ENCODE measurements at regions of chr1 and their contacts with region 1.

Region 1: DNA sequence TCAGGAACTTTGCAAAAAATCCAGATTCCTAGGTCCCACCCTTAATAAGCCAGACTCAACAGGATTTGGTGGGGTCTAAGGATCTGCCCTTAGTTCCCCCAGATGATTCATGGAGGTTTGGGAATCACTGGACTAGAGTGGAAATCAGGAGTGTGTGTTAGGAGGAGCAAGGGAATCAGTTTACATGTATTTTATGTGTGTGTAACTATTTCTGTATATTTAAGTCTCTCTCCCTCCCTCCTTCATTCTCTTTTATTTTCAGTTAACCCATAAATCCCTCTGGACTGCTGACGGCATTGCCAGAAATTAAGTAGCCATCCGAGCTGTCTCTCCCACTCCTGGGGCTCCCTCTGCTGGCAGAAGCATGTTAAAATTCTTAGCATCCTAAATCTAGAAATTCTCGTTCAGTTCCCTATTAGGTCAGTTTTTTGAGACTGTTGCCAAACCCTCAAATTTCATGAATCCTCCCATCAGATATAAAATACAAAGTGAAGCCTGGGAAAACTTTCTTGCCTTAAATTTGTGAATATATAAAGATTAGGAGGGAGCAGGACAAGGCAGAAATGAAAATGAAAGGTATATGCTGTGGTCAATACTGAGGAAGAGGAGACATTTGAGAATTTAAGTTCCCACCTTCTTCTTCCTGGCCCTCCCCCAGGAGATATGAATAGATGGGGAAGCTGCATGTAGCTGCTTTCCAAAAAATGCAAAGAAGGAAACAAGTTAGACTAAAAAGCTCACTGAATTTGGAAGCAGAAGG is 11.7 kb upstream of the HSD11B1 start:
- DNase-seq: peak; percentile 68 to 85 (median 80)
- ATAC-seq: peak in 3 of 4 donors; percentile 56 to 78 (median 61)
- H3K4me3 ChIP-seq: no peak overlapping the region
- H3K27ac ChIP-seq: peak overlapping the region in 5 of 12 donors; percentile 17 to 56 (median 49)
- H3K4me1 ChIP-seq: peaks cover 0 to 46% (median 14%) of the 10 kb centered on the region in 12 donors
- H3K27me3 ChIP-seq: no peaks in the 10 kb centered on the region
- CTCF ChIP-seq: peak; percentile 78 to 94 (median 85)
- POLR2A ChIP-seq: no peak

Region 2: DNA sequence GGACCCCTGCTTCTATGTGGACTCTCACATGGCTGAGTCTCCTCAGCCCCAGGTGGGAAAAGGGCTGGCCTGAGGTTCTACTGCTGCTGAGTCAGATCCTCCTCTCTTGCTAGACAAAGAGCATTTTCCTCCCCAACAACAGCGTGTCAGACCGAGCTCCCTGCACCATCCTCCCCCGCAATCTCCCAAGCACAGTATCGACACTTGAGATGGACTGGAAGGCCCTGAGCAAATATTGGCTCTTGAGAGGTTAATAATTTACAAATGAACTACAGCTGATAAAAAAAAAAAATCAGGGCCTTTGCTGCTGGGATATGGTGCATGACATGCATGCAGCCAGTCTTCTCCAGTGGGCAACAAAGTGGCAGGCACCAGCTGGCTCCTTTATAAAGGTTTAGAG is 164.9 kb before region 1 on chr1:
- intact Hi-C with region 1: no loop called
- DNase-seq: no peak
- ATAC-seq: no peak
- H3K4me3 ChIP-seq: no peak overlapping the region
- H3K27ac ChIP-seq: no peak overlapping the region
- H3K4me1 ChIP-seq: no peaks in the 10 kb centered on the region
- H3K27me3 ChIP-seq: peaks cover 0 to 26% (median 3%) of the 10 kb centered on the region in 9 donors
- CTCF ChIP-seq: no peak
- POLR2A ChIP-seq: no peak

Region 3: DNA sequence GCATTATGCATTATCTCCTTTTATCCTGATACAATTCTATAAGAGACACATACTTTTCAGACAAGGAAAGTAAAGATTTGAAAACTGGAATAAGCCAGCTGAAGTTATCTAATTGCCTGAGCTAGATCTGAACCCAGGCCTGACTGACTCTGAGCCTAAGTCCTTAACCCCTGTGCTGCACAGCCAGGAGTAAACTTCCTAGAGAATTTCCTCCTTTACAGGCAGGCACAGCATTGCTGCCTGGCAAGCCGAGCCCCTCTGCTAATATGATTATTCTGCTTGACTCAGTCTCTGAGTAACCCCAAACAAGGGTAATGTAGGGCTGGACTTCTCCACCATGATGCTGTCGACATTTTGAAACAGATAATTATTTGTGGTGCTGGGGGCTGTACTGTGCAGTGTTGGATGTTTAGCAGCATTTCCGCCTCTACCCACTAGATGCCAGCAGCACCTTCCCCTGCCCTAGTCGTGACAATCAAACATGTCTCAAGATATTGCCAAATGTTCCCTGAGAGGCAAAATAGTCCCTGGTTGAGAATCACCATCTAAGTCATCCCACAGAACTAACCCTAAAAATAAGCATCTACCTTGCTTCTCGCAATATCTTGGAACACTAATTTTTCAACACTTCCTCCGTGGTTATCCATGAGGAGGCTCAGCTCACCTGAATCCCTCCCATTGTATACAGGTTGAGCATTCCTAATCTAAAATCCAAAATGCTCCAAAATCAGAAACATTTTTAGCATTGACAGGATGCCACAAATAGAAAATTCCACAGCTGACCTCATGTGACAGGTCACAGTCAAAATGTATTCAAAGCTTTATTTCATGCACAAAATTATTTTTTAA is 90.9 kb before region 1 on chr1:
- intact Hi-C with region 1: loop called in 5 of 10 experiments (anchors 1 to 10 kb)
- DNase-seq: no peak
- ATAC-seq: peak; percentile 49 to 90 (median 85)
- H3K4me3 ChIP-seq: no peak overlapping the region
- H3K27ac ChIP-seq: no peak overlapping the region
- H3K4me1 ChIP-seq: no peaks in the 10 kb centered on the region
- H3K27me3 ChIP-seq: no peaks in the 10 kb centered on the region
- CTCF ChIP-seq: peak; percentile 44 to 73 (median 62)
- POLR2A ChIP-seq: no peak

Region 4: DNA sequence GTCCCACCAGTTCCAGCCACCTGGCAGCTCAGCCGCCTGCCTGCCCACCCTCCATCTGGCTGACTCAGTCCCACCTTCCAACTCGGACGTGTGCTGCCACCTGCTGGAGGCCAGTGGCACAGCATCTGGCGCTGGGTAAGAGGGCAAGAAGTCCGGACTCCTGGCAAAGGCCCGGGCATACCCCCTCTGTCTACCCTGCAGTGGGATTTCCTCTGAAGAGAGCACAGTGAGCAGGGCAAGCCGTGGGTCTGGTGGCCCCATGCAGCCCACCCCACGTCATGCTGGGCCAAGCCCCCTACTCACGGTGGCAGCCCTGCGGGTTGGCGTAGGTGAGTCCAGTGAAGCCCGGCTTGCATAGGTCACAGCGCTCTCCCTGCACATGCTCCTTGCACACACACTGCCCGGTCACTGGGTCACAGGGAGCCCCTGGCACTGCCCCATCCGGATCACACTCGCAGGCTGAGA is 65.2 kb before region 1 on chr1:
- intact Hi-C with region 1: loop called in 5 of 10 experiments (anchors 2 to 10 kb)
- DNase-seq: peak; percentile 78 to 88 (median 81)
- ATAC-seq: peak; percentile 29 to 77 (median 72)
- H3K4me3 ChIP-seq: peak overlapping the region in 2 of 12 donors; percentile 7 to 38
- H3K27ac ChIP-seq: peak overlapping the region in 4 of 12 donors; percentile 4 to 55 (median 38)
- H3K4me1 ChIP-seq: peaks cover 0 to 55% (median 37%) of the 10 kb centered on the region in 12 donors
- H3K27me3 ChIP-seq: no peaks in the 10 kb centered on the region
- CTCF ChIP-seq: peak; percentile 95 to 99 (median 97)
- POLR2A ChIP-seq: no peak

Region 5: GRCh38 chr1:209643285-209644020 is 49.5 kb before region 1 on chr1:
- intact Hi-C with region 1: loop called in 5 of 10 experiments (anchors 2 to 5 kb)
- DNase-seq: peak in 4 of 5 donors; percentile 80 to 91 (median 85)
- ATAC-seq: peak; percentile 68 to 87 (median 80)
- H3K4me3 ChIP-seq: no peak overlapping the region
- H3K27ac ChIP-seq: peak overlapping the region; percentile 38 to 94 (median 90)
- H3K4me1 ChIP-seq: peaks cover 16 to 84% (median 73%) of the 10 kb centered on the region in 12 donors
- H3K27me3 ChIP-seq: no peaks in the 10 kb centered on the region
- CTCF ChIP-seq: peak in 2 of 12 donors; percentile 6 to 27
- POLR2A ChIP-seq: no peak

Region 6: GRCh38 chr1:209648931-209649776 is 43.8 kb before region 1 on chr1:
- intact Hi-C with region 1: loop called in 4 of 10 experiments (anchors 5 kb)
- DNase-seq: no peak
- ATAC-seq: peak in 3 of 4 donors; percentile 47 to 66 (median 62)
- H3K4me3 ChIP-seq: no peak overlapping the region
- H3K27ac ChIP-seq: peak overlapping the region in 10 of 12 donors; percentile 4 to 94 (median 34)
- H3K4me1 ChIP-seq: peaks cover 10 to 97% (median 77%) of the 10 kb centered on the region in 12 donors
- H3K27me3 ChIP-seq: no peaks in the 10 kb centered on the region
- CTCF ChIP-seq: no peak
- POLR2A ChIP-seq: no peak

Region 7: DNA sequence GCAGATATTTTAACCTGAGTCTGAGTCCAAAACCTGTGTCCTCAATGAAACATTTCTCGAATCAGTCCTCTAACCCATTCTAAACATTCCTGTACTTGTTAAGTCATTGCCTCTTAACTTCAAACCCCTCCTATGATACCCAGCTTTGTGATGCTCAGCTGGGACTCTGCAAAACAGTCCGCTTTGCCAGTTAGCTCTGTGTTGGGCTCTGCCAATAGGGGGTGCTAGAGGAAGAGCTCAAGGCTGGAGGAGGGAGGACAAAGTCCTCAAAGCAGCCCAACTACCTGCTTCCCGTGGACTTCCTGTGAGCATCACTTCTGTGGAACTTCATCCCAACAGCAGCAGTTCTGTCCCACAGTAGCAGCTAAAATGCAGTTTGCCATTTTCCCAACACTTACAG is 207.0 kb after region 1 on chr1:
- intact Hi-C with region 1: no loop called
- DNase-seq: no peak
- ATAC-seq: no peak
- H3K4me3 ChIP-seq: no peak overlapping the region
- H3K27ac ChIP-seq: no peak overlapping the region
- H3K4me1 ChIP-seq: no peaks in the 10 kb centered on the region
- H3K27me3 ChIP-seq: no peaks in the 10 kb centered on the region
- CTCF ChIP-seq: peak in 1 of 12 donors; percentile 12
- POLR2A ChIP-seq: no peak

Measured in heart left ventricle (tissue), 16 donors.